Mammary epithelial cell (primary cell): ENCODE measurements at regions of chr13 and their contacts with region 1.

Region 1: GRCh38 chr13:66965181-66965580 is 265.0 kb downstream of the PCDH9 start:
- DNase-seq: no peak
- H3K4me3 ChIP-seq: no peak overlapping the region
- H3K27ac ChIP-seq: no peak overlapping the region
- H3K4me1 ChIP-seq: no peaks in the 10 kb centered on the region
- H3K27me3 ChIP-seq: peaks cover 2% of the 10 kb centered on the region
- CTCF ChIP-seq: no peak

Region 2: DNA sequence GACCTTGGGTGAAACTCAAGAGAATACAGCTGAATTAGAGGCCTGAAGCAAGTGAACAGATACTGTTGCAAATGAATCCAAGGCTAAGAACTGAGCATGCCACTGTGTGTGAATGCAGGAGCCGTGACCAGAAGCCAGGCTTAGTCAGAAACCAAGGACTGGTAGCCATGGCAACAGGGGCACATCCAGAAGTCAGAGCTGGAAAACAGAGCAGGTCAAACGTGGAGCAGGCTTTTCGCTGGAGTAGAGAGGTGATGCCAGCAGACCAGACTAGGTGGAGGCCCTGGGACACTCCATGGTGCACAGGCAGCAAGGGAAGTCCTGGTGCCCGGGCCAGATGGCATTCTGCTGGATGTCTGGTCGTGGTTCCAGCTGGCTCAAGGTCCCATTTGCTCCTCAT is 299.2 kb before region 1 on chr13:
- CTCF ChIA-PET with region 1: interaction called, 12 read pairs
- dilution Hi-C with region 1: no loop called
- in situ Hi-C with region 1: no loop called
- intact Hi-C with region 1: no loop called
- DNase-seq: peak; percentile 79
- H3K4me3 ChIP-seq: no peak overlapping the region
- H3K27ac ChIP-seq: no peak overlapping the region
- H3K4me1 ChIP-seq: no peaks in the 10 kb centered on the region
- H3K27me3 ChIP-seq: peaks cover under 1% of the 10 kb centered on the region
- CTCF ChIP-seq: no peak